WTC11 (cell line): ENCODE measurements at regions of chr1 and their contacts with region 1.

Region 1: GRCh38 chr1:230772457-230773395 is 25.5 kb downstream of the CAPN9 start:
- DNase-seq: no peak
- ATAC-seq: peak; percentile 91
- H3K4me3 Mint-ChIP-seq: no peak overlapping the region
- H3K27ac Mint-ChIP-seq: no peak overlapping the region
- H3K4me1 Mint-ChIP-seq: 0 out of 2 replicates have a peak, but pooled peaks cover 2% of the 10 kb centered on the region
- H3K27me3 Mint-ChIP-seq: peaks cover 25% of the 10 kb centered on the region
- CTCF ChIP-seq: no peak

Region 2: DNA sequence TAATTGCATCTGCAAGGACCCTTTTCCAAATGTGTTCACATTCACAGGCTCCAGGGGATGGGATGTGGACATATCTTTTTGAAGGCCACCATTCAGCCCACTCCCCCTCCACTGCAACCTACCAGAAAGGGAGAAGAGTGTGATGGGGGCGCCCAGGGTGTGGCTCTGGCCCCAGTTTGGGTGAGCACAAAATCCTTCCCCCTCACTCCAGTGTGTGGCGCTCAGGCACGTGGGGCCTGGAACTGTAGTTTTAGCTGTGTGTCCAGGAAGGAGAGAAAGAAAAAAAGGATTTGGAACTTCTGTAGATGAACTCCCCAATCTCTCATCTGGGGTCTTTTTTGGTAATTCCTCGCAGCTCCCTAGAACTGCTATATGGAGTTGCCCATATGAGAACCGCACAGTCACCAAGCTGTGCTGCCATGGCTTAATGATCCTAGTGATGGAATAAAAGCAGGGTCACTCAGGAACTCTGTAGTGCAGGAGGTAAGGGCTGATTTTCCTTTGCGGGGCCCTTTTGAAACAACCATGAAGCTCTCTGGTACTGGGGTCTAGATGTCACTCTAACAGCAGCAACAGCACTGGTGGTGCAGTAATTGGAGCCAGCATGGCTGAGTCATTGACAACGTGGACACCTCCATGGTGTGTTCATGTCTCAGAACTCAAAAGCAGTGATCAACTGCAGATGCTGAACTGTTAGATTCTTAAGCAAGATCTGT is 75.8 kb before region 1 on chr1:
- CTCF ChIA-PET with region 1: interaction called, 12 read pairs
- POLR2A ChIA-PET with region 1: no interaction called
- DNase-seq: no peak
- ATAC-seq: peak; percentile 38; the same call in 1 of the 2 replicates
- H3K4me3 Mint-ChIP-seq: no peak overlapping the region
- H3K27ac Mint-ChIP-seq: no peak overlapping the region
- H3K4me1 Mint-ChIP-seq: peaks cover 13% of the 10 kb centered on the region
- H3K27me3 Mint-ChIP-seq: no peaks in the 10 kb centered on the region
- CTCF ChIP-seq: no peak

Region 3: DNA sequence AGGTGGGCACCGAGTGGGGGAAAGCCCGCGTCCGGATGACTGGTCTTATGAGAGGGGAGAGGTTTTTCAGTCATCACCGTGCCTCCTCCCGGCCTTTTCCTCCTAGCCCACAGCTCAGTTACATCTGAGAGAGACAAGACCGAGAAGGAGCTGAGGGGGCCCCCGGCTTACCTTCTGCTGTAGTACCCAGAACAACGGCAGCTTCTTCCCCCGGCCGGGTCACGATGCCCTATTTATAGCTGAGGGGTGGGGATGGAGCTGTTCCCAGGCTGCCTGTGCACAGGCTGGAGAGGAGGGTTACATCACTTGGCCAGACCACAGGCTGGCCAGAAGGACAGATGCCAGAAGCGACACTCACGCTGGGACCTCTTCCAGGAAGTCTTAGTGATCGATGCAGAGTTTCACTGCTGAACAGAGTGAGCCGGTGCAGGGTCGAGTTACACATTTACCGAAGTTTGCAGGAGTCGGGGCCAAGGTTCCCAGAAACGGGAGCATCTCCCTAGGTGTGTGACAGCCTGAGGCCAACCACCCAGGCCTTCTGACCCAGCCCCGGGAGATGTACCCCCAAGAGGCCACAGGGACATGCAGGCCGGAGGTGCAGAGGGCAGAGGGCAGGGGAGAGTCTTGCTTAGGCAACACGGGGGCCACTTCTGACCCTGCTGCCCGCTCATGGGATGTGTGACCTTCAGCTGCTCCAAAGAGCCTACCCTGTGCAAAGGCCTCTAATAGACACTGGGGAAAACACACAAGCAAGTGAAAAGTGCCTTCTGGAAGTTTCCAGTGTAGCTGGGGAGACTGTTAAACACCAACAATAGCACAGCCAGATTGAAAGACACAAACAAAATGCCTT is 58.6 kb before region 1 on chr1 and contains the start of gene AGT:
- CTCF ChIA-PET with region 1: no interaction called
- POLR2A ChIA-PET with region 1: no interaction called
- DNase-seq: no peak
- ATAC-seq: peak; percentile 39
- H3K4me3 Mint-ChIP-seq: no peak within 1 kb of the TSS
- H3K27ac Mint-ChIP-seq: no peak within 1 kb of the TSS
- H3K4me1 Mint-ChIP-seq: peaks cover 8% of the 10 kb centered on the region
- H3K27me3 Mint-ChIP-seq: no peaks in the 10 kb centered on the region; the same call in 1 of the 2 replicates
- CTCF ChIP-seq: no peak
- total RNA-seq, gene AGT: 0.64 to 1.0 TPM (median 1.0 TPM) in 3 replicates

Region 4: DNA sequence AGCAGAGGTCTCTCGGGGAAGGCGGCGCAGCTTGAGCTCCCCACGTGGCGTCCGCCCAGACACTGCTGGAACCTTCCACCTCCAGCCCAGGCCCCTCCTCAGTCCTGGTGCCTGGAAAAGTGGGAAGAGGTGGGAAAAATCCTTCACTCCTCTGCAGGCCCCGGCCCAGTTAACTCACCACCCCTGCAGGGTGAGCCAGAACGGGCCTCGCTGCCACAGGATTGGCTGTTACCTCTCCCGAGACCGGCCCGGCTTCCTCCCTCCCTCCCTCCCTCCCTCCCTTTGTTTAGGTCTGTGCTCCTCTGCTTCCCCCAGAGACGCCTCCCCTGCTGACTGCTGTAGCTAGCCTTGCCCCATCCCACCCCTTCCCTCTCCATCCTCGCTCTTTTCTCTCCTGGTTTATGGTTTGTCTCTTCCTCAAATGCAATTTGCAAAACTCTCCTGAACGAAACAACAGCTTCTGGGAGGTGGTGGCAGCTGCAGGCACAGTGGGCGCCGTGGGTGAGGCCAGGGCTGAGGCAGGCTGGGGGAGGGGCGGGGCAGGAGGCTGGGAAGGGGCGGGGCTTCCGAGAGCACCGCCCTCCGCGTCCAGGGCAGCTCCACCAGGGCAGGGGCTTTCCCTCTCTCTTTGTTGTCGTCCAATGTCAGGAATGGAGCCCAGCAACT is 19.0 kb before region 1 on chr1:
- CTCF ChIA-PET with region 1: interaction called, 11 read pairs
- POLR2A ChIA-PET with region 1: no interaction called
- DNase-seq: peak; percentile 73
- ATAC-seq: peak; percentile 84
- H3K4me3 Mint-ChIP-seq: peak overlapping the region; percentile 58
- H3K27ac Mint-ChIP-seq: peak overlapping the region; percentile 92
- H3K4me1 Mint-ChIP-seq: peaks cover 47% of the 10 kb centered on the region
- H3K27me3 Mint-ChIP-seq: peaks cover 3% of the 10 kb centered on the region; the same call in 1 of the 2 replicates
- CTCF ChIP-seq: no peak